Right ventricle myocardium superior (tissue), 1 donor: ENCODE measurements at regions of chr16 and their contacts with region 1.

Region 1: GRCh38 chr16:70679666-70680494 is 6.0 kb downstream of the MTSS2 start:
- DNase-seq: peak; percentile 57
- ATAC-seq: peak; percentile 43

Region 2: DNA sequence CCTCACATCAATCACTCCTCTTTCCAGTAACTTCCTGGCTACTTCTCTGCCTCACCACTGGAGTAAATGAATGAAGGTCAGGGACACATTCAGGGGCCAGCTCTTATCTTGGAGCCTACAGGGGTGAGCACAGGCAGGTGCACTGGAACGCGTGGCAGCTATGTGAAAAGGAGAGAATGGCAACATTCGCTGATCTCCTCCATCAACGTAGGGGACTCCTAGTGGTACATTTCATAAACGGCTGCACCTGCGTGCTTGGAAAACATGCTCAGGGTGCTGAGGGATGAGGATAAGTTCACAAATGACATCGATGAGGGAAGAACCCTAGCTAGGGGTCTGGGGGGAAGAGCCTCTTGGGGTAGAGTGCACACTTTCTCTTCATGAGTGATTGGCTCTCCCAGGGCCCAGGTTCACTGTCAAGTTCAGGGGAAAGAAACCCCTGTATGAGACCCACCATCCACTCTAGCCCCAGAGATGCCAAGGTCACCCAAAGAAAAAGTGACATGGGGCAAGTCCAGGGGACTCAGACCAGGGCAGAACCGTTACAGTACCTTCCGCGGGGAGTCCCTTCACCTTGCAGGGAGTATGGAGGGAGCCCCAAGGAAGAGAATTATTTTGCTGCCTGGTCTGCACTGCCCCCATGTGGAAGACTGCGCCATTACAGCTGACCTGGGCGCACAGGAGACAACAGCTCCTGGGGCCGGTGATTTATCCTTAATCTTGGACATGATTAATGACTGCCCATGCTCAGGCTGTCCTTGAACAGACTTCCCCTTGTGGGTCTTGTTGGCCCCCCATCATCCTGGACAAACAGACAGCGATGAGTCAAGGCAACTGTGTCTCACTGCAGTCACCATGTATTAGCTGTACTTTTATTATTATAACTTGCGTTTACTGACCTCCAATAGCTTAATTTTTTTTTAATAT is 91.0 kb after region 1 on chr16:
- intact Hi-C with region 1: loop called (anchors 5 kb)
- DNase-seq: peak; percentile 69
- ATAC-seq: peak; percentile 78